Activated CD4-positive, alpha-beta T cell treated with anti-CD3 and anti-CD28 coated beads, Interleukin-2, amount 10 ng/mL, durations not matched to agents 24 days and 14 days (primary cell): ENCODE measurements at regions of chr3 and their contacts with region 1.

Region 1: GRCh38 chr3:158109804-158110657 is at the start of gene RSRC1:
- DNase-seq: peak; percentile 94
- H3K4me3 Mint-ChIP-seq: peak within 1 kb of the TSS; percentile 91
- H3K27ac Mint-ChIP-seq: peak within 1 kb of the TSS; percentile 75
- H3K4me1 Mint-ChIP-seq: peaks cover 43% of the 10 kb centered on the region
- H3K27me3 Mint-ChIP-seq: peaks cover 36% of the 10 kb centered on the region
- total RNA-seq, gene RSRC1: 41.7 and 44.6 TPM in 2 replicates

Region 2: DNA sequence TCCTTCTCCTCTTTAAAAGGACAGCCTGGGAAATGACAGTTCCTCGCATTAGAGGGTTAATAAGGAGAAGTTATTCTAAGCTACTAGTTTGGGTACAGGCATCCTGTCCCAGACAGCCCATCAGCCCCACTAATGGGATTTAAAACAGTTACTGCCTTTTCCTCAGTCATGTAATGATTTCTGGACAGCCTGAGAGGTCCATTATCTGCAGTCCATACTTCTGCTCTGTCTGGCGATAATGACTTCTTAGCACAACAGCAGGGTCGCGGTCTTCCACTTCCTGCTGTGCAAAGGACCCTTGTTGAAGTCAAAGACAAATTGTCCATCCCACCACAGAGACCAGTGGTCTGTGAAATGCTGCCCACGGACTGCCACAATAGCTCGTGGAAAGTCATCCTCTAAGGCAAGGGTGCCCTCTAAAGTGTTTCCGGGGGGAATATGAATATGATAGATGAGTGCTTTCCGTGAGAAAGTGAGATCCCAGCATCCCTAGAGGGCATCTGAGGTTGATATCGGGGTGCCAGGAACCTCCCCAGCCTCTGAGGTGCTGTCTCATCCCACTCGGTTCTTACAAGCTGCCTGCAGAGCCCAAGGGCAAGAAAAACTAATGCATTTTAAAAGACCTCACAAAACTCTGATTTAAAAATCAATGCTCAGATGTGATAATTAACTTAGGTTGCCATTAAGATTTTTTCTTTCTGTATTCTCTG is 104.5 kb before region 1 on chr3:
- intact Hi-C with region 1: no loop called
- DNase-seq: no peak
- H3K4me3 Mint-ChIP-seq: no peak overlapping the region
- H3K27ac Mint-ChIP-seq: no peak overlapping the region
- H3K4me1 Mint-ChIP-seq: no peaks in the 10 kb centered on the region
- H3K27me3 Mint-ChIP-seq: no peaks in the 10 kb centered on the region

Region 3: GRCh38 chr3:158152186-158152585 is 42.2 kb after region 1 on chr3:
- intact Hi-C with region 1: no loop called
- DNase-seq: no peak
- H3K4me3 Mint-ChIP-seq: no peak overlapping the region
- H3K27ac Mint-ChIP-seq: no peak overlapping the region
- H3K4me1 Mint-ChIP-seq: peaks cover 5% of the 10 kb centered on the region
- H3K27me3 Mint-ChIP-seq: no peaks in the 10 kb centered on the region

Region 4: DNA sequence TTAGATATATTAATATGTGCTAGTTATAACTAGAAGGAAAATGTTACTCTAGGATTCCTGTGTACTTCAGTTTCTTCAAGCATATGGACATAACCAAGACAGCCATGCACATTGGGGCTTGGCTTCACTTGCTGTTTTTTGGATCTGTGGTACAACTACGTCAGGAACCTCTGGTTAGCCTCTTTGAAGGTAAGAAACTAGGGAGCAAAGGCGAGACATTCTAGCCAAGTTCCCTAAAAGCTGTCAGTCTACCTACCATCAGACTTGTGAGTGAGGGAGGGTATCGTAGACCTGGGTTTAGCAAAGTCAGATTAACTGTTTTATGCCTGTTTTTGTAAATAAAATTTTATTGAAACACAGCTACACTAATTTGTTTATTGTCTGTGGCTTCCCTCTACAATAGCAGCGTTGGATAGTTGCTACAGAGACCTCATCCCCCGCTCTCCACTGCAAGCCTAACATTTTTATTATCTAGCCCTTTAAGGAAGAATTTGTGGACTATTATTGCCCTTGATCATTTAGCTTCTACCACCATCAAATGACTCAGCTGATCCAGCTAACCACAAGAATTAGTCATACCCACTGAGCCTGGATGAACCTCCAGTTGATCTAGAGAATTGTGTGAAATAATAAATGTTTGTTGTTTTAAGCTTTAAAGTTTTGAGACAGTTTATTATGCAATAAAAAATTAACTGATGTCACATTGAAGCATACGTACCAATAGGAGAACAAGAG is 57.9 kb after region 1 on chr3:
- intact Hi-C with region 1: loop called (anchors 5 kb)
- DNase-seq: peak; percentile 58
- H3K4me3 Mint-ChIP-seq: no peak overlapping the region
- H3K27ac Mint-ChIP-seq: no peak overlapping the region
- H3K4me1 Mint-ChIP-seq: peaks cover 5% of the 10 kb centered on the region
- H3K27me3 Mint-ChIP-seq: peaks cover 1% of the 10 kb centered on the region

Region 5: GRCh38 chr3:158434412-158435038 is 324.5 kb after region 1 on chr3:
- intact Hi-C with region 1: loop called (anchors 2 kb)
- DNase-seq: peak; percentile 78
- H3K4me3 Mint-ChIP-seq: no peak overlapping the region
- H3K27ac Mint-ChIP-seq: no peak overlapping the region
- H3K4me1 Mint-ChIP-seq: no peaks in the 10 kb centered on the region
- H3K27me3 Mint-ChIP-seq: no peaks in the 10 kb centered on the region

Region 6: GRCh38 chr3:158801696-158802408 is 691.8 kb after region 1 on chr3 and contains the start of gene MFSD1:
- intact Hi-C with region 1: loop called (anchors 5 kb)
- DNase-seq: peak; percentile 97
- H3K4me3 Mint-ChIP-seq: peak within 1 kb of the TSS; percentile 88
- H3K27ac Mint-ChIP-seq: peak within 1 kb of the TSS; percentile 86
- H3K4me1 Mint-ChIP-seq: peaks cover 15% of the 10 kb centered on the region
- H3K27me3 Mint-ChIP-seq: peaks cover 15% of the 10 kb centered on the region
- total RNA-seq, gene MFSD1: 20.4 and 23.2 TPM in 2 replicates